ENCODE measurements at regions of chr22 and their contacts with region 1.

Region 1: GRCh38 chr22:38051900-38052862 is 5.0 kb upstream of the PICK1 start:
- DNase-seq: peak; percentile 87
- ATAC-seq: peak; percentile 83
- H3K4me3 Mint-ChIP-seq: no peak overlapping the region
- H3K27ac Mint-ChIP-seq: no peak overlapping the region
- H3K4me1 Mint-ChIP-seq: peaks cover 7% of the 10 kb centered on the region
- H3K27me3 Mint-ChIP-seq: peaks cover 7% of the 10 kb centered on the region

Region 2: DNA sequence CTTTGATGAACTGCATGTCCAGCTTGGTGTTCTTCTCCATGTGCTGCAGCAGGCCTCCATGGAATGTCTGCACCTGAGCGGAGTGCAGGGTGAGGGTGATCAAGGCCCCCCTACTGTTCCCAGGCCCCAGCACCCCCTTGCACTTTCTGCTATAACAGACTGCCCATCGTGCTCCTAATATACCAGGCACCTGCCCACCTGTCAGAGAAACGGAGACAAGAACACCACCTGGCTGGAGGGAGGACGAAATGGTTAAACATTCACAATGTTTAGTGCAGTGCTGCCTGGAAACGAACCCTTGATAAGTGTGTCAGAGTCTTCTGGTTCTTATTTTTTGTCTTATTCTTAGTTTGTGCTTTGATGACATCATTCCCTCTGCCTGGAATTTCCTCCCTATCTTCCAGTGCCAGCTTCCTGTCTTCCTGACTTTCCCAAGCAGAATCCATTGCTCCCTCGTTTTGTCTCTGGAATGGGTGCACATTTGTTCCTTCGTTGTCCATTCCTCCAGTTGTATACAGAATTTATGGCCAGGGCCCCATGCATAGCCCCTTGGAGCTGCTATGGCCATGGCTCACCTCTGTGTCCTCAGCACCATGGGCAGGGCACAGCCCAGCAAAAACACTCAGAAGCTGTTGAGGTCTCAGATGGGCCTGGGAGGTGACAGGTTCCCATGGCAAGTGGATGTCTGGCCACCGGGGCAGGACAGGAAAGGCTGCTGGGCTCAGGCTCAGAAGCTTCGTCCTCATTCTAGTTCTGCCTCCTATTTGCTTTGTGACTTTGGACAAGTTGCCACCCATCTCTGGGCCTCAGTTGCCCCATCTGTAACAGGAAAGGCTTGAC is 46.4 kb after region 1 on chr22:
- CTCF ChIA-PET with region 1: interaction called, 11 read pairs
- POLR2A ChIA-PET with region 1: no interaction called
- intact Hi-C with region 1: no loop called
- DNase-seq: no peak
- ATAC-seq: no peak
- H3K4me3 Mint-ChIP-seq: no peak overlapping the region
- H3K27ac Mint-ChIP-seq: no peak overlapping the region
- H3K4me1 Mint-ChIP-seq: no peaks in the 10 kb centered on the region
- H3K27me3 Mint-ChIP-seq: no peaks in the 10 kb centered on the region

Region 3: DNA sequence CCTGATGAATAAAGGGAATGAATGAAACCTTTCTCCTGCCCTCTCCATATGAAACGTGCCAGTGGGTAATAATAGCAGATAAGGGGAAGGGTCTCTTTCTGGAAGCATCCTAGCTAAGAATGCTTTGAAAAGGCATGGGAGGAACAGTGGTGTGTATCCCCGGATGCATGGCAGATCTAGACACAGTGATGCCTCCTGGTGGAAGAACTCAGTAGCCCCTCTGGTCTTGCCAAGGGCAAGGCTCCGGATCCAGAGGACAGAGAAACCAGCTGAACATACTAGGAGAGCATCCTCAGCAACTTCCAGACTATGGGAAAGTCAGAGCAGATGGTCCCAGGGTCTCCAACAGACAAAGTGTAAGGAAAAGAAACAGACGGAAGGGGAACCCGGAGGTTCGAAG is 51.9 kb after region 1 on chr22:
- CTCF ChIA-PET with region 1: interaction called, 11 read pairs
- POLR2A ChIA-PET with region 1: no interaction called
- intact Hi-C with region 1: loop called in 1 of 2 experiments (anchors 1 kb)
- DNase-seq: no peak
- ATAC-seq: no peak
- H3K4me3 Mint-ChIP-seq: no peak overlapping the region
- H3K27ac Mint-ChIP-seq: no peak overlapping the region
- H3K4me1 Mint-ChIP-seq: peaks cover 4% of the 10 kb centered on the region
- H3K27me3 Mint-ChIP-seq: no peaks in the 10 kb centered on the region

Region 4: DNA sequence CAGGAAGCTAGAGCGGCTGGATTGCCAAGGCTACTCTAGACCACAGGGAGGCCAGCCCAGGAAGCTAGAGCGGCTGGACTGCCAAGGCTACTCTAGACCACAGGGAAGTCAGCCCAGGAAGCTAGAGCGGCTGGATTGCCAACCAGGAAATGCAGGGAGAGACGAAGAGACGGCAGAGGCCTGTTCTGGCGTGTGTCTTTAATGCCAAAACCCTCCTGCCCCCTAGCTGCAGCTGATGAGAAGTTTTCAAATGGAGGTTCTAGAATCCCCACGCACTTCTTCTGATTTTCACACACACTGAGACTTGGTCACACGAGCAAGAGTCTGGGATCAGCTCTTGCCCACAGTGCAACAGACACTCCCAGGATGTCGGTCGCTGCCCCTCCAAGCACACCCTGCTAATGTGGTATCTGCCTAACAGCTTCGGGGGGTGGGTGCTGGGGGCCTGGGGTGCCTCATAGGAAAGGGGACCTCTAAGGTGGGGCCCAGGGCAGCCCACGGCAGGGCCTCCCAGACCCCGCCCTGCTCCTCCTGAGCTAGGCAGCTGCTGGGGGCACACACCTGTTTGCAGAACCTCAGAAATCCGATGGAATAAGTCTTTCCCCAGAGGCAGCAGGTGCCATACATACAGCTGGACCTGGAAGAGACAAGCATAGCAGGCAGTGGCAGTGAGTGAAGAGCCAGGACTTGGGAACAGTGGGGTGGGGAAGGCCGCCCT is 178.1 kb after region 1 on chr22:
- CTCF ChIA-PET with region 1: interaction called, 9 read pairs
- POLR2A ChIA-PET with region 1: no interaction called
- intact Hi-C with region 1: loop called (anchors 1 to 2 kb)
- DNase-seq: peak; percentile 58
- ATAC-seq: peak; percentile 69
- H3K4me3 Mint-ChIP-seq: no peak overlapping the region
- H3K27ac Mint-ChIP-seq: no peak overlapping the region
- H3K4me1 Mint-ChIP-seq: no peaks in the 10 kb centered on the region
- H3K27me3 Mint-ChIP-seq: no peaks in the 10 kb centered on the region

Measured in activated CD4-positive, alpha-beta T cell treated with anti-CD3 and anti-CD28 coated beads for 36 hours (primary cell).